ENCODE measurements at regions of chr15 and their contacts with region 1.

Region 1: GRCh38 chr15:100918034-100918689 is 995 bp upstream of the LRRK1 start:
- DNase-seq: peak; percentile 73
- H3K4me3 Mint-ChIP-seq: peak overlapping the region; percentile 74
- H3K27ac Mint-ChIP-seq: no peak overlapping the region
- H3K4me1 Mint-ChIP-seq: peaks cover 19% of the 10 kb centered on the region
- H3K27me3 Mint-ChIP-seq: peaks cover 64% of the 10 kb centered on the region

Region 2: DNA sequence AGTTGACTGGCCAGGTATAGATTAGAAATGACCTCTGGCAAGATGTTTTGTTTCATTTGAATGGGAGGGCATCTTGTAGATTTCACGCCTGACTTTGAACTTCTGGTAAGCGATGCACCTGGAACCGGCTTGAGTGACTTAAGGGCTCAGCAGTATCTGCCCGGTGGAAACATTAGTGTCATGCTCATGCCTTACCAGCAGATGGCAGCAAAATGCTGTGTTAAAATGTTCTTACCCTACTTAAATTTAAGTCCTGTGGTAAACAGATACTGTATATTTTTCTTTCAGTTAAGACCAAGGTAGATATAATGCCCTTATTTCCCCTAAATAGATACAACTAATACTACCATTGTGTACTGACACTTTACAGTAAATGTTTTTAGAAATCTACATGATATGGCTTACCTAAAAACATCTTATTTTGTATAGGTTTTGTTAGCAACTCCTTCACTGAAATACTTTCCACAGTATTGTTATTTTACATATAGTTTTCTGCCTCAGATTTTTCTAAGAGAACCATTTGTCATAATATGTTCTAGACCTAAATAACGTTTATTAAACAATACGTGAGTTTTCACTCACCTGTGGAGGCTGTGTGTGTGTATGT is 290.3 kb before region 1 on chr15:
- CTCF ChIA-PET with region 1: no interaction called
- intact Hi-C with region 1: loop called (anchors 5 kb)
- DNase-seq: peak; percentile 79
- H3K4me3 Mint-ChIP-seq: no peak overlapping the region
- H3K27ac Mint-ChIP-seq: no peak overlapping the region
- H3K4me1 Mint-ChIP-seq: peaks cover 15% of the 10 kb centered on the region
- H3K27me3 Mint-ChIP-seq: no peaks in the 10 kb centered on the region

Region 3: GRCh38 chr15:100905850-100906249 is 12.3 kb before region 1 on chr15:
- CTCF ChIA-PET with region 1: interaction called, 15 read pairs
- intact Hi-C with region 1: no loop called
- DNase-seq: no peak
- H3K4me3 Mint-ChIP-seq: no peak overlapping the region
- H3K27ac Mint-ChIP-seq: no peak overlapping the region
- H3K4me1 Mint-ChIP-seq: no peaks in the 10 kb centered on the region
- H3K27me3 Mint-ChIP-seq: peaks cover 12% of the 10 kb centered on the region